ENCODE measurements at regions of chr6 and their contacts with region 1.

Region 1: DNA sequence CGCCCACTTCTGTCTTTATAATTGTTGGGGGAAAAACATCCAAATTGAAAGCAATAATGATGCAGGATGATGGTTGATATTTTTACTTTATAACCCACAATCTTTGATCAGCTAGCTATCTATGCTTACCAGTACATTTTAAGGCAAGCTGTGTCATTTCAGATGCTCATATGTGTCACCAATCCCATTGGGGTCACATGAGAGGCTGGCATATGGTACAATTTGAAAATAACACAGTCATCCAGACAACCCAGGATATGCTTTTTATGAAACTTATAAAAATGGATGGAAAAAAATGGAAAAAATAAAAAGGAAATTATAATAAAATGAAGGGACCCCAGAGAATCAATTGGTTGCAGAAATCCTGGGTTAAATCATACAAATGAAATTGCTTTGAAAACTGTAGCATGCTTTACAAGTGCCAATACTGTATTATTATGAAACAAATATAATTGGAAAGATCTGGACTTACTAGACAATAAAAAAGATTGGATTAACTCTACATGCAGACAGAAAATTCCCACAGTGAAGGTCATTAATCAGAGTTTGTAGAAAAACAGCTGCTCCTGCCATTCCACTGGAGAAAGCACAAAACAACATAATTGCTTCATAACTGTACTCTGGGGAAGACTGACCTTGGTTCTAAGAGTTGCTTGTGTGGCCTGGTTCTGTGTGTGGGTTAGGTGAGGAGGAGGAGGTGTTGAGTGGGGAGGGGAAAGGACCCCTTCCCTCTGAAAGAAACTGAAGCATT is 13.3 kb upstream of the PRIM2 start:
- DNase-seq: no peak
- H3K4me3 ChIP-seq: no peak overlapping the region
- H3K27ac ChIP-seq: peak overlapping the region; percentile 66 to 84 (median 80)
- H3K4me1 ChIP-seq: peaks cover 0 to 78% (median 70%) of the 10 kb centered on the region in 4 donors
- H3K27me3 ChIP-seq: no peaks in the 10 kb centered on the region
- CTCF ChIP-seq: no peak
- EP300 ChIP-seq: no peak
- POLR2A ChIP-seq: no peak

Region 2: GRCh38 chr6:57207141-57207540 is 97.0 kb before region 1 on chr6:
- intact Hi-C with region 1: no loop called
- DNase-seq: no peak
- H3K4me3 ChIP-seq: no peak overlapping the region
- H3K27ac ChIP-seq: peak overlapping the region in 3 of 4 donors; percentile 33 to 100 (median 96)
- H3K4me1 ChIP-seq: peaks cover 0 to 97% (median 51%) of the 10 kb centered on the region in 4 donors
- H3K27me3 ChIP-seq: no peaks in the 10 kb centered on the region
- CTCF ChIP-seq: no peak
- EP300 ChIP-seq: no peak
- POLR2A ChIP-seq: no peak

Region 3: DNA sequence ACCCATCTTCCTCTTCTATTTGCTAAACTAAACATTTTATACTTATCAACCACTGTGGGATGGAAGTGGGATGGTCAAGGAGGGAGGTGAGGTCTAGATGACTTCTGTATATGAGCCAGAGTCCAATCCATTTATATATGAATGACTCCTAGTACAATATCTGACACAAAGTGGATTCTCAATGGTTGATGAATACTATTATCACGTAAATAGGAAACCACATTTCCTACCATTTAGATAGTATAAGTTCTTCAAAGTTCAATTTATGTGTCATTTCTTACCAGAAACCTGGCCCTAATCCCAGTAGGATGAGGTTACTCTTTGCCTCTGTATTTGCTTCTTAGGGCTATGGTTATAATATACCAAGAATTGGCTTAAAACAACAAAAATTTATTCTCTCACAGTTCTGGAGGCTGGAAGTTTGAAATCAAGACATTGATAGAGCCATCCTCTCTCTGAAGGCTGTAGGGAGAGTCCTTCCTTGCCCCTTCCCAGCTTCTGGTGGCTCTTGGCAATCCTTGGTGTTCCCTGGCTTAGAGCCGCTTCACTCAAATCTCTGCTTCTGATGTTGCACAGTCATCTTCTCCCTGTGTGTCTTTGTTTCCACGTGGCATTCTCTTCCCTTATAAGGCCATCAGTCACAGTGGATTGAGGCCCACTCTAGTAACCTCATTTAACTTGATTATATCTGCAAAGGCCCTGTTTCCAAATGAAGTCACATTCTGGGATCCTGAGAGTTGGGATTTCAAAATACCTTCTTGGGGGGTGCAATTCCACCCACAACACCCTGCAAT is 41.0 kb before region 1 on chr6:
- intact Hi-C with region 1: loop called (anchors 5 kb)
- DNase-seq: peak; percentile 82
- H3K4me3 ChIP-seq: peak overlapping the region in 1 of 4 donors; percentile 4
- H3K27ac ChIP-seq: peak overlapping the region; percentile 77 to 95 (median 90)
- H3K4me1 ChIP-seq: peaks cover 0 to 92% (median 74%) of the 10 kb centered on the region in 4 donors
- H3K27me3 ChIP-seq: no peaks in the 10 kb centered on the region
- CTCF ChIP-seq: no peak
- EP300 ChIP-seq: peak; percentile 22 to 73 (median 61)
- POLR2A ChIP-seq: no peak

Region 4: DNA sequence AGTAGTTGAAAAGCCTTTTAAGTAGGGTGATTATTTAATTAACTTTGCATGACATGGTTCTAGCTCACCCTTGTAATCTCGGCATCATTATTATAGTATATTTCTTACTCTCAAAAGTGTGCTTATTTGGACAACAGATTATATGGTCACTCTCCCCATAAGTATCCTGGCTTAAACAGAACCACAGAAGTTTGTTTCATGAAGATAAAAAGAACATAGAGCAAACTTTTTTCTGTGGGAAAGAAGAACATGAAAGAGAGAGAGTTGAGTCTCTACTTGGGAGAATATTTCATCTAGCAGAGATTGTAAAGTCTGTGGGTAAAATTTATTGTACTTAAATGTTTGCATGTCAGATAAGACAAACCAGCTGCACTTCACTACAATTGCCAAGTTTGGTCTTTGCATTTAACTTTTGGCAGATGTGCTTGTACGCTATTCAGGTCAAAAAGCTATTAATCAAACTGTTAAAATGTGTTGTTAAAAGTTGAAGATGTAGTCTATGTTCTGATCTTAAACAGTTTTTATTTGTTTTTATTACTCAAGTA is 20.1 kb before region 1 on chr6:
- intact Hi-C with region 1: loop called (anchors 1 kb)
- DNase-seq: no peak
- H3K4me3 ChIP-seq: no peak overlapping the region
- H3K27ac ChIP-seq: peak overlapping the region in 3 of 4 donors; percentile 57 to 76 (median 75)
- H3K4me1 ChIP-seq: peaks cover 0 to 35% (median 31%) of the 10 kb centered on the region in 4 donors
- H3K27me3 ChIP-seq: no peaks in the 10 kb centered on the region
- CTCF ChIP-seq: no peak
- EP300 ChIP-seq: peak; percentile 5 to 70 (median 64)
- POLR2A ChIP-seq: no peak